ENCODE measurements at regions of chr20 and their contacts with region 1.

Region 1: DNA sequence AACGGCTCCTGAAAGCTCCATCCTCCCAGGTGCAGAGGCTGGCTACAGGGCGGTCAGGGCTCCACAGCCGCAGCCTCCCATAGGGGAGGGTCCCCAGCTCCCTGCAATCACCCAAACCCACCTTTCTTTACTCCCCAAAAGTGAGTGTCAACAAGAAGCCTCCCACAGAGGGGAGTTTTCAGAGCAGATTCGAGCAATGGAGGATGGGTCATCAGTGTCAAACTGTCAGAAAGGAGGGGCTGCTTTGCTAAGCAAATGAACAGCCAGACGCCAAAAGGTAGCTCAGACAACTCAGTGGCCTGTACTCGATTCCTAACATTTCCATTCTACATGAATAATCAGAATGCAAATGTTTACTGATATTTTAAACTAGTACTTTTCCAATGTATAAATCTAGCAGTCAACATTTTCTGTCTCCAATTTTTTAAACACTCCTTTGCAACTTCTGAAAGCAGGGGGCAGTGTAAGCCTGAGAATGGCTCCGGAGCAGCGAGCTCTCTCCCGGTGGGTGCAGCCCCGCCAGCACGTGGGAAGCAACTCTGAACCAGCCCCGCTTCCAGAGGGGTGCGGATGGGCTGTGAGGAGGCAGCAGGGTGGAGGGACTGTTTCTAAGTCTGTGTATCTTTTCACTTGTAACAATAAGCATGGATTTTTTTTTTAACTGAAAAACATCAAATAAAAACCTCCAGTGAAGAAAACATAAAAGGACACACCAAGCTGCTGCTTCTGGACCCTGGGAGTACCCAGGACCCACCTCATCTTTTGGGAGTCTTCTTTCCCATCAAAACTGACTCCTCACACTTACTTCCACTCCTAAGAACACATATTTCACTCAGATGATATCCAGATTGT is 54.9 kb downstream of the TAF4 start:
- DNase-seq: no peak
- H3K4me3 ChIP-seq: no peak overlapping the region
- H3K27ac ChIP-seq: no peak overlapping the region
- H3K4me1 ChIP-seq: peaks cover 0 to 27% (median 19%) of the 10 kb centered on the region in 4 donors
- H3K27me3 ChIP-seq: no peaks in the 10 kb centered on the region
- CTCF ChIP-seq: peak; percentile 56 to 68 (median 58)
- EP300 ChIP-seq: no peak
- POLR2A ChIP-seq: no peak

Region 2: DNA sequence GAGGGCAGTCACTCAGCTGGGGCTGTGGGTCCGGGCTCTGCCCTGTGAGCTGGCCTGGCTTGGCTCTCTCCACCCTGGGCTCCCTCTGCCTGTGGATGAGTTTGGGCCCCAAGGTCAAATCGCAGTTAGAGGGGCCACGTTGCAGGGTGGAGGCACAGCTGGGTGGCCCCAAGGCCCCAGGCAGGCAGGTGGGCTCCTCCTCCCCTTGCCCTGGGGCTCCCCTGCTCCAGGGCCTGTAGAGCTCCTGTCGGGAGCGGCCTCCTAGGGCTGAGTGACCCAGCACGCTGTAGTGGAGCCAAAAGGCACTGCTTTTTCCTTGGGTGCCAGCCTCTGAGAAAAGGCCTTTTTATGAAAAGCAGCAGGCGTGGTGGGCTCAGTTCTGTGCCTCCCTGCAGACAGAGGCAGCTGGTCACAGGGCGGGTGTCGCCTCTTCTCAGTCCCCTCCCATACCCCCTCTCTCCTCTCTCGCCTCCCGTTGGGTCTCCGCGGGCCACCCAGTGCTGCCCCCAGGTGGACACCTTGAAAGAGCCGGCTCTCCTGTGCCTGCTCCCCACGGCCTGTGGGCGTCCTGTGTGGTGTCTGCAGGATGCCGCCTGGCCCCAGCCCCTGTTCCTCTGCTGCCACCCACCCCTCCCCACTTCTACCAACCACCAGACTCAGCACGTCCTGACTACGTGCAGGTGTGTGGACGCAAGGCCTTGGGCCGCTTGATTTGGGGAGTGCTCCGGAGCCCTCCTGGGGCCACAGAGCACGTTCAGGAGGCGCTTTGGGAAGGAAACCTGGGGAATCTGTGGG is 146.0 kb after region 1 on chr20:
- intact Hi-C with region 1: loop called (anchors 5 kb)
- DNase-seq: no peak
- H3K4me3 ChIP-seq: no peak overlapping the region
- H3K27ac ChIP-seq: no peak overlapping the region
- H3K4me1 ChIP-seq: peaks cover 11 to 18% (median 14%) of the 10 kb centered on the region in 4 donors
- H3K27me3 ChIP-seq: no peaks in the 10 kb centered on the region
- CTCF ChIP-seq: peak; percentile 46 to 75 (median 53)
- EP300 ChIP-seq: no peak
- POLR2A ChIP-seq: no peak